ENCODE measurements at regions of chr14 and their contacts with region 1.

Region 1: DNA sequence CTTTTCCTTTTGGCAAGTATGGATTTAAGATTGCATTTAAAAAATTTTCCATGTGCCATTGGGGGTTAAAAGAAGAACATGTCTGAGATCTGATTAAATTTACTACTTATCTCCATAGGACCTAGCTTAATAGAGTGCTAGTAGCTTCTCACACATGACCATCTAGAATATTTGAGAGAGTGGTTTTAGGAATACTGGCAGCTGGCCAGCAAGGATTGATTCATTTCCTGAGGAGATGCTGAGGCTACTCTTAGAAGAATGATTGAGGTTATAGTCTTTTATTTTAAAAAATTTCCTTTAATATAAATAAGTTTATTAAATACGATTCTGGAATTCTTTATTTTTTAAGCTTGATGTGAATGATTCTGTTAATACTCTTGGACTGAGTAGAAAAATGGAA is 56.2 kb downstream of the MIPOL1 start:
- DNase-seq: no peak

Region 2: DNA sequence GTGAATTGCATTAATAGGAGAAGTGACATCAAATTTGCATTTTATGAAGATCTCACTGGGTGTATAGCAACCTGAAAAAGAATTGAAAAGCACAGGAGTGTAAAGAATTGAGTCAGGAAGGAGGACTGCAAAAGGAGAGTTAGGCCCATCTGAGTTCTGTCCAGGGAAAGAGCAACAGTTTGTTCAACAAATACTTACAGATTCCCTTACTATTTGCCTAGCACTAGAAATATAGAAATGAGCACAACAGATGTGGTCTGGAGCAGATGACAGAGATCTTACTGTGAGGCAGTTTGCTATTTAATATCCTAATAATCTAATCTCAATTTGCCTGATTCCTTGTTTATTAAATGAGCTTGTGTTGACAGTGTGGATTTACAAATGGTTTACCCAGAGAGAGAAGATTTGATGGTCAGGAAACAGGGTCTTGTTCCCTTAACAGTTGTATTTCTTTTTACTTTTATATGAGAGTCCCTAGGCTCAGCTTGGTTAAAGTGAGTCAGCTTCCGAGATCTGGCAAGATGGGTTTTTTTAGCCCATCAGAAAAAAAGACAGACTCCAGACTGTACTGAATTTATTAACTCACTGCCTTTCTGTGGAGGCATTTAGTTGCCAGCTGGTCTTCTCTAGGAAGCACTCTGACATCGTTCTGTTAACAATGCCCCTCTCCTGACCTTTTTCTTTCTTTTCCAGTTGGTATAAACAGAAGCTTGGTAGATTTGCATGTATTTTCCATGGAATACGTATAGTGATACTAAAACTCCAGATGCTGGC is 571.2 kb after region 1 on chr14:
- in situ Hi-C with region 1: loop called (anchors 25 kb)
- DNase-seq: no peak

Measured in Caki2 (cell line).